ENCODE measurements at regions of chr7 and their contacts with region 1.

Region 1: DNA sequence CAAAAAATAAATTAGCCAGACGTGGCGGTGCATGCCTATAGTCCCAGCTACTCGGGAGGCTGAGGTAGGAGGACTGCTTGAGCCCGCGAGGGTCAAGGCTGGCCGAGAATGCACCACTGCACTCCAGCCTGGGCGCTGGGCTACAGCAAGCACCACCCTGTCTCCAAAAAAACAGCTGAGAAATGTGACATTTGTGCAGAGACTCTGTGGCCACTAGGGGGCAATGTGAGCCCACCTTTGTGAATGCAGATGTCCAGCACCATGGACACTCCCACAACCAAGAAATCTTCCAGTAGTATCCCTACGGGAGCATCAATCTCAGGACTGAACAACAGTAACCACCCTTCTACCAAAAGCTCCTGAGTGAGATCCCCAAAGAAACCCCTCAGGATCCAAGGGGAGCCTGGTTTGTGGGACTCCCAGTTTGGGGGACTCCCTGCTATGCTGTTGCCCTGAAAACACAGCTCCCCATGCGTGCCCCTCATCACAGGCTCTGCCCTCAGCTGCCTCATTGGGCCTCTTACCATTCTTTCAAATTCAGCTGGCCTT is 6.2 kb upstream of the AHCYL2 start:
- DNase-seq: peak; percentile 87 to 88
- H3K4me3 ChIP-seq: no peak overlapping the region
- H3K27ac ChIP-seq: no peak overlapping the region
- H3K4me1 ChIP-seq: peaks cover 0 to 7% (median 0%) of the 10 kb centered on the region in 4 donors
- H3K27me3 ChIP-seq: peaks cover 0 to 12% of the 10 kb centered on the region in 2 donors
- CTCF ChIP-seq: peak; percentile 88 to 90

Region 2: DNA sequence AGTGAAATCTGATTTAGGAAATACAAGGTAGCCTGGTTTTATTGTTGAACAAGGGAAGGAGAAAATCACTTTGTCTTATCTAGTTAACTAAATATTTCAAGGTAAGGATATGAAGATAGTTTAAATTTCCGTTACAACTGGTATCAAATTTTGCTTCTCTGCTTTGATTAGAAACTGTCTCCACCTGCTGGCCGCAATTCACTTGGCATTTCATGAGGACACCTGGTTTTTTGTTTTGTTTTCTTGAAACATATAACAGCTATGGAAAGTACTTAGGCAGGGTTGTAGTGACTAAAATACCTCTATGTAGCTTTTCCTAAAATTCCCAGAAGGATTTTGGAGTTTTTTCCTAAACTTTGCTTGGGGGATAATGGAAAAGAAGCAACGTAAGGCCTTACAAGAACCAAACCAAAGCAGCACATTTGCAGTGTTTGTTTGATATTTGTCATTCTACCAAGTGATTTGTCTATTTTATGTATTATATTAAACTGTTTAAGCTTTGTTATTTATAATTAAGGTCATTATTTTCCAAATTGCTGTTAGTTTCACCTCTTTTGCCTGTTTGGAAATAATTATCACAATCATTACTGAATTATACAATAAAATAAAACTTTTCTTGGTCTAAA is 79.8 kb after region 1 on chr7:
- intact Hi-C with region 1: loop called (anchors 5 kb)
- DNase-seq: peak in 1 of 2 donors; percentile 28
- H3K4me3 ChIP-seq: no peak overlapping the region
- H3K27ac ChIP-seq: no peak overlapping the region
- H3K4me1 ChIP-seq: peaks cover 0 to 9% (median 4%) of the 10 kb centered on the region in 4 donors
- H3K27me3 ChIP-seq: no peaks in the 10 kb centered on the region
- CTCF ChIP-seq: peak; percentile 41 to 60

Region 3: GRCh38 chr7:129468087-129468486 is 249.5 kb after region 1 on chr7:
- intact Hi-C with region 1: loop called (anchors 5 kb)
- DNase-seq: no peak
- H3K4me3 ChIP-seq: no peak overlapping the region
- H3K27ac ChIP-seq: no peak overlapping the region
- H3K4me1 ChIP-seq: no peaks in the 10 kb centered on the region
- H3K27me3 ChIP-seq: peaks cover 0 to 4% of the 10 kb centered on the region in 2 donors
- CTCF ChIP-seq: no peak